ENCODE measurements at regions of chr2 and their contacts with region 1.

Region 1: DNA sequence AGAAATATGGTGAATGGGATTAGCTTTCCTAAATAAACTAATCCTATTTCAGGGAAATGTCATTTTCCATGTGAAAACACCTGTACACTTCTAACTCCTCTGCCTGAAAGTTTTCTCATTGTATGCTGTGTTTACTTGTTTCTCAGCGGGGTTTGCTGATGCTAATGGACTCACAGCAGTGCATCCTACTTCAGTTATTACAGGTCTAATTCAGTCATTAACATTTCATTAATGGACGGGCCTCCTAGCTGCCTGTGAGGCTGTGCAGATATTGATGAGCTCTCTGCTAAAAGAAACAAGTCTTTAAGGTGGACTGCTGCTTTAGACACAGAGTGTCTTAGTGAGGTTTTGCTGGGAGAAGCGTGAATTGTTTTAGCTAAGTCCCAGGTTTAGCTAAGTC is 1342.0 kb upstream of the ZEB2 start:
- DNase-seq: no peak
- CTCF ChIP-seq: no peak

Region 2: GRCh38 chr2:145851730-145852129 is 10.2 kb before region 1 on chr2:
- CTCF ChIA-PET with region 1: interaction called, 16 read pairs
- POLR2A ChIA-PET with region 1: no interaction called
- DNase-seq: no peak
- CTCF ChIP-seq: no peak